Calu3 (cell line): ENCODE measurements at regions of chr1 and their contacts with region 1.

Region 1: GRCh38 chr1:65067491-65068201 is 80.4 kb upstream of the AK4 start:
- DNase-seq: peak; percentile 46
- H3K4me3 Mint-ChIP-seq: peak overlapping the region; percentile 77
- H3K27ac Mint-ChIP-seq: peak overlapping the region; percentile 82
- H3K4me1 Mint-ChIP-seq: peaks cover 25% of the 10 kb centered on the region
- H3K27me3 Mint-ChIP-seq: no peaks in the 10 kb centered on the region
- CTCF ChIP-seq: no peak

Region 2: DNA sequence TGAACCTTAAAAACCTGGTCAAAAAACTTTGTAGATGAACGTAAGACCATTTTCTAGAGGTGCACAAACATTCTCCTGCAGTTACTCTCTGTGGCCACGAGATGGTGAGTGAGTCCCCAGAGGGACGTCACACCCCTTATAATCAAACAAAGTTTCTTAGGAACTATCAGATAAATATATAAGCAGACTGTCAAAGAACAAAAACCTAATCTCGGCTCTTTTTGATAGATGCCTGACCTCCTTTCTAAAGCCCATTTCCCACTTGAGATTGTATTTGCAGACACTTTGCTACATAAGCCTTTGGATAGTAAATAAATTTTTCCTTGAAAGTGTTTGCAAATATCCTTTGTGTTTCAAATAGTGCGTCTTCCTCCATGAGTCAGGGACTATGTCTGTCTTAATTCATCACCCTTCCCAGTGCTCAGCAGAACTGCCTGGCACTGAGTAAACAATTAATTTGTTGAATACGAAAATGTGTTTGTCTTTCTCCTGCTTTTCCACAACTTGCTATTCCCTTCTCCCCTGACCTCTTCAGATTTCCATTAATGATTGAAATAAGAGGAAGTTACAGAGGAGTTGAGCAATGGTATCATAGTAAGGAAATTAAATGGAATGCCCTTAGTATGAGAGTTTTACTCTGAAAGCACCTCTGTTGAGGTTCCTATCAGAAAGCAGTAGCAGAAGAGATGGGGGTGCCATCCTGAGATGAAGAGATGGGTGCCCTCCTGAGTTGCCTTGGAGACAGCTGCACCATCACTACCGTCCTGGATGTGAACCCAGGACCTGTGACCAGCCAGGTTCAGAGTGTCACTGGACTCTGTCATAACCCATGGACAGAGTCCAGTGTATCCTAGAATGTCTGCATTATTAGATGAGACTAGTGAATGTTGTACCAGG is 380.6 kb before region 1 on chr1:
- CTCF ChIA-PET with region 1: no interaction called
- intact Hi-C with region 1: no loop called
- DNase-seq: peak; percentile 54
- H3K4me3 Mint-ChIP-seq: peak overlapping the region; percentile 44
- H3K27ac Mint-ChIP-seq: peak overlapping the region; percentile 88
- H3K4me1 Mint-ChIP-seq: peaks cover 40% of the 10 kb centered on the region
- H3K27me3 Mint-ChIP-seq: no peaks in the 10 kb centered on the region
- CTCF ChIP-seq: peak; percentile 76

Region 3: DNA sequence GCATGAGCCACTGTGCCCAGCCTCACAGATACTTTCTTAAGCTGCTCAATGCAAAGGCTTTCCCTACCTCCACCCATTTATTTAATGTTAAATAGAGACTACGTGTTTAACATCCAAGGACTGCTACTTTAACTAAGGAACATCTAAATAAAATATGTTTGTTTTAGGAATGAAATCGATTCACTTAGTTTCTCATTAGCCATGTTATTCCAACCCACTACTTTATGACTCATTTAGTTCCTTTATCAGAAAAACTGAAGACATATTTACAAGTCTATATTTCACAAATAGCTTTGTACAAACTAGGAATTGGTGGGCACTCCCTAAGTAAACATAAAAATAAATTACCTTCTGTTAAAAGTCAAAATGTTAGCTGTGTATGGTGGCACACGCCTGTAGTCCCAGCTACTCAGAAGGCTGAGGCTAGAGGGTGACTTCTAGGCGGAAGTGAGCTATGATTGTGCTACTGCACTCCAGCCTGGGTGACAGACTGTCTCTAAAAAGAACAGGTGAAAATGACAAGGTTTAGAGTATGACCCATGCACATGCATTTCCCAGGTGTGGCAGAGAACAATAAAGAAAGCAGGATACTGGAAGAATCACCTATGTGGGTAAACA is 40.5 kb after region 1 on chr1:
- CTCF ChIA-PET with region 1: no interaction called
- intact Hi-C with region 1: loop called (anchors 5 kb)
- DNase-seq: peak; percentile 61
- H3K4me3 Mint-ChIP-seq: peak overlapping the region; percentile 33
- H3K27ac Mint-ChIP-seq: peak overlapping the region; percentile 28
- H3K4me1 Mint-ChIP-seq: peaks cover 37% of the 10 kb centered on the region
- H3K27me3 Mint-ChIP-seq: no peaks in the 10 kb centered on the region
- CTCF ChIP-seq: no peak

Region 4: DNA sequence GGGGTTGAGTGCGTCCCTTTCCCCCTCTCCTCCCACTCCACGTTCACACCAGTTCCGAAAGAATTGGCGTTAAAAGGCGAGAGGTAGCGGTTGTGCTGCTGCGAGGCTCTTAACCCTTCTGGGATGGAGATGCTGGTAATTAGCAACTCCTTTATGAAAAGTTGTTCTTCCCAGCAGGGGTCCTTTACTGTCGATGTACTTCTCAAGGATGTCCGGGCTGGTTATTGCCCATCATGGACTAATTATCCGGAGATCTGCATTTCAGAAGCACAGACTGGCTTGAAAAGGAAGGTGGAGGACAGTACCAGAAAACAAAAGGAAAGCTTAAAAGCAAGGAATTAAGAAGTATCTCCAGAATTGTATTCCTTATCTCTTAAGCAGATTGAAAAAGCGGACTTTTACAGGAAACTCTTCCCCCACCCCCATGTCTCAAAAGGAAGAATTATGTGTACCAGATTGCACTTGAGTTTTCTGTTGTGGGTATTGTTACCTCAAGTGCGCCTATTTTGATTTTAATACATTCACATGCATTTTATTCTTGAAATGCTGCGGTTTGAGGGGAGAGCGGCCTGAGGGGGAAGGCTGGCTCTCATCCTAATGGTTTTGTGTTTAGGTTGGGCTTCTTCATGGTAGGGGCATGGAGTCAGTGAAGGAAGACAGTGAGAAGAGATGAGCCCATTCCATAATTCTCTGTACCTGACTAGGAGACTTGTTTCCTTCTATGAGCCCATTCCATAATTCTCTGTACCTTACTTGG is 81.9 kb after region 1 on chr1:
- CTCF ChIA-PET with region 1: no interaction called
- intact Hi-C with region 1: loop called (anchors 5 kb)
- DNase-seq: no peak
- H3K4me3 Mint-ChIP-seq: peak overlapping the region; percentile 87
- H3K27ac Mint-ChIP-seq: no peak overlapping the region
- H3K4me1 Mint-ChIP-seq: peaks cover 57% of the 10 kb centered on the region
- H3K27me3 Mint-ChIP-seq: no peaks in the 10 kb centered on the region
- CTCF ChIP-seq: no peak

Region 5: DNA sequence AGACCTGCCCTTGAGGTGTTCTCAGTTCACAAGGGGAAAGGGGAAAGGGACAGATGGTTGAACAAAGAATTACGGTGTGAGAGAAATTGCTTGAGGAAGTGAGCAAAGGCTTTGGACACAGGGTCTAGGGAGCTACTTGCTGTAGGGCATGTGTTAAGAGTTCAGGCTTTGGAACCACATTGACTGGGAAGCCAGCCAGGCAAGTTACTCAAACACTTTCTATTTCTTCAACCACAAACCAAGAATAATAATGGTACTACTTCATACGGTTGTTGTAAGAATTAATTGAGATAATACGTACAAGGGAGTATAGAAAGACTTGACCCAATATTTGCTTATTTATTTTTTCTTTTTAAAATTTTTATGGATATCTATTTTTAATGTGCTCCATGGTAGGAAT is 106.9 kb after region 1 on chr1:
- CTCF ChIA-PET with region 1: no interaction called
- intact Hi-C with region 1: loop called (anchors 2 kb)
- DNase-seq: peak; percentile 70
- H3K4me3 Mint-ChIP-seq: peak overlapping the region; percentile 54
- H3K27ac Mint-ChIP-seq: peak overlapping the region; percentile 88
- H3K4me1 Mint-ChIP-seq: peaks cover 81% of the 10 kb centered on the region
- H3K27me3 Mint-ChIP-seq: no peaks in the 10 kb centered on the region
- CTCF ChIP-seq: no peak

Region 6: GRCh38 chr1:65209005-65209885 is 141.6 kb after region 1 on chr1:
- CTCF ChIA-PET with region 1: interaction called, 17 read pairs
- intact Hi-C with region 1: loop called (anchors 1 kb)
- DNase-seq: peak; percentile 57
- H3K4me3 Mint-ChIP-seq: no peak overlapping the region
- H3K27ac Mint-ChIP-seq: no peak overlapping the region
- H3K4me1 Mint-ChIP-seq: no peaks in the 10 kb centered on the region
- H3K27me3 Mint-ChIP-seq: no peaks in the 10 kb centered on the region
- CTCF ChIP-seq: peak; percentile 75

Region 7: DNA sequence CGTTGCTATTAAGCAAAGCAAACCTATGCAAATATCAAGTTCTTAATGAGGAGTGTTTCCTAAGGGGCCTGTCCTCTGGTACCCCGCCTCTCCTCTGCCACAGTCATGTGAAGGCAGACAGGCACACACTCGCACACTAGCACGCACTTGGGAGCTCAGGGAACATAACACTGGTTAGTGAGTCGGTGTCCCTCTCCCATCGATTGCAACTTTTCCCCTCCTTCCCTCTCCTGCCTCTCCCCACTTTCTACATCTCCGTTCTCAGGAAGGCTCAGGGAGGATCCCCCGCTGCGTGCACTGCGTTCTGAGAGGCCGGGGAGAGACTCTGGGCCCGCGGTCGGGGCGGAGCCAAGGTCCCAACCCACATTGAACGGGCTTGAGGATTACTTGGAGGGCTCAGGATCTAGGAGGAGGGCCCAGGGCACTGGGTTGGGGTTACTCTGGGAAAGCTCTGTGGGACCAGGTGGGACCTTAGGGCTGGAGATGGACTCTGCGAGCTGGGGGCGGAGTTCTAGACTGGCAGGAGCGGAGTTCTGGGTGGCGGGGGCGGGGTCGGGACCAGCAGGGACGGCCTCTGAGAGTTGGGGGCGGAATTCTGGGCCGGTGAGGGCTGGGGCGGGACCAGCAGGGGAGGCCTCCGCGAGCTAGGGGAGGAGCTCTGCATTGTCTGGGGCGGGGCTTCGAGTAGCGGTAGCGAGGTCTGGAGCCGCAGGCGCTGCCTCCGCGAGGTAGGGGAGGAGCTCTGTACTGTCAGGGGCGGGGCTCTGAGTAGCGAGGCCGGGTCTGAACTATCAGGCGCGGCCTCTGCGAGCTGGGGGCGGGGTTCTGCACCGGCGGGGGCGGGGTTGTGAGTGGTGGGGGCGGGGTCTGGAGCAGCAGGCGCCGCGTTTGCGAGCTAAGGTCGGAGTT is 352.3 kb after region 1 on chr1:
- CTCF ChIA-PET with region 1: no interaction called
- intact Hi-C with region 1: loop called (anchors 10 kb)
- DNase-seq: peak; percentile 99
- H3K4me3 Mint-ChIP-seq: no peak overlapping the region
- H3K27ac Mint-ChIP-seq: no peak overlapping the region
- H3K4me1 Mint-ChIP-seq: peaks cover 31% of the 10 kb centered on the region
- H3K27me3 Mint-ChIP-seq: no peaks in the 10 kb centered on the region
- CTCF ChIP-seq: no peak

Region 8: DNA sequence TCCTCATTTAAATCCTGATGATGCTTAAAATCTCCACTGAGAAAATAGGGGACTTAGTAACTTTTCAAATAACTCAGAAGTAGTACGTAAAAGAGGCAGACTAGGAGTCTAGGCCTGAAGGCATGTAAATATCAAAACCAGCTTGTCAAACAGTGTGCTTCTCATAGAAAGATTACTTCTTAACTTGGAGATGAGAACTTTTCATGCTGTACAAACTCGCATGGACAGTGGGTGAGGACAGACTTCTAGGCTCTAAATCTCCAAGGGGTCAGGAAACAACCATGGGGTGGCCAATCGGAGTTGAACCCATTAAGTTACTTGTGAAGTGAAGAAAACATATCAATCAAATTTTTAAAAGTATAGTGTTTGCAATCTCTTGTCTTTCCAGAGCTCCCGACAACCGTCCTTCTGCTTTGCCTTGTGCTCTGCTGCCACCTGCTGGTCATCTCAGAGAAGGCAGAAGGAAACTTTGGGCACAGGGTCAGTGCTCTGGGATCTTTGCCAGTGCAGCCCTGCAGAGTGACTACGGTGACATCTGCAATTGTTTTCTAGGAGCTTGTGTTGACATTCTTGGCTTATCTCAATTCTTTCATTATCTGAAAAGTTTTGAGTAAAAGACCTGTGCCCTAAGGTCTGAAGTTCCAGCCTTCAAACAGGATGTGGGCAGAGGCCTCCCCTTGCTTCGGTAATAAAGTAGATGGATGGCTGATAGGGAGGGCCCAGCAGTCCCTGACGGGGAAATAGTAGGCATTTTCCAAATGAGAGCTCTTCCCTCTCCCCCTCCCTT is 620.0 kb after region 1 on chr1:
- CTCF ChIA-PET with region 1: interaction called, 10 read pairs
- intact Hi-C with region 1: loop called (anchors 2 kb)
- DNase-seq: peak; percentile 90
- H3K4me3 Mint-ChIP-seq: no peak overlapping the region
- H3K27ac Mint-ChIP-seq: no peak overlapping the region
- H3K4me1 Mint-ChIP-seq: no peaks in the 10 kb centered on the region
- H3K27me3 Mint-ChIP-seq: peaks cover 25% of the 10 kb centered on the region
- CTCF ChIP-seq: peak; percentile 95